Activated T-helper 1 cell treated with anti-CD3 and anti-CD28 coated beads, Interleukin-12 subunit alpha, Interleukin-12 subunit beta, Interleukin-2, Interleukin-4 antibody, amounts not matched to agents 30 ng/mL and 10 ng/mL and 1 ng/mL, durations not matched to agents 14 hours and 24 hours and 36 hours (primary cell): ENCODE measurements at regions of chr1 and their contacts with region 1.

Region 1: GRCh38 chr1:78126506-78126905 is 80.7 kb downstream of the GIPC2 start:
- DNase-seq: no peak
- H3K4me3 Mint-ChIP-seq: no peak overlapping the region
- H3K27ac Mint-ChIP-seq: no peak overlapping the region
- H3K4me1 Mint-ChIP-seq: no peaks in the 10 kb centered on the region
- H3K27me3 Mint-ChIP-seq: peaks cover 2% of the 10 kb centered on the region

Region 2: GRCh38 chr1:78607334-78607927 is 480.9 kb after region 1 on chr1:
- intact Hi-C with region 1: loop called (anchors 2 kb)
- DNase-seq: no peak
- H3K4me3 Mint-ChIP-seq: no peak overlapping the region
- H3K27ac Mint-ChIP-seq: no peak overlapping the region
- H3K4me1 Mint-ChIP-seq: no peaks in the 10 kb centered on the region
- H3K27me3 Mint-ChIP-seq: peaks cover 40% of the 10 kb centered on the region

Region 3: DNA sequence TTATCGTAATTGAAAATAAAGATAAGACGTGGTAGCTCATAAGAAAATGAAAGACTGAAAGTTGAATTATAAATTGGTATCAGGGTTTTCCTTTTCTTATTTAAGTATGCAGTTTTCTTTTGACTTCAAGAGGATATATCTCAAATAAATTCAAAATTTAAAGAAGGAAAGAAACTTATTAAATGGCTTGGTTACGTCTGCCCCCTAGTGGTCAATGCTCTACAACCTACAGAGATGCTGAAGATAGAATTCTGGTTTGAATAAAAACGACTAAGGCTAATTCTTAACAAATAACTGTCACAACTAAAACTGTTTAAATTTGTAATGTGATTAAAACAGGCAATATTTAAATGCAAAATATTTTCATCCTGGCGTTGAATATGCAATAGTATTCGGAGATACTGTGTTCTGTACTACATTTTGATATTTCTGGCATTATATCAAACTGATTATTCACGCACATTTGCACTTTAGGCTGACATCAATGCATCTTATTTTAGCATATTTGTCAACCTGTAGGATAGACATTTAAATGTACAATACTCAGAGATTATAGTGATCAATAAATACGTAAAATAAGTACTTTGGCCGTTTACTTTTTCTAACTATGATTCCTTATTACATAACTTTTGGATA is 550.0 kb after region 1 on chr1:
- intact Hi-C with region 1: loop called (anchors 1 kb)
- DNase-seq: peak; percentile 25
- H3K4me3 Mint-ChIP-seq: no peak overlapping the region
- H3K27ac Mint-ChIP-seq: no peak overlapping the region
- H3K4me1 Mint-ChIP-seq: peaks cover 34% of the 10 kb centered on the region
- H3K27me3 Mint-ChIP-seq: peaks cover 8% of the 10 kb centered on the region